WTC11 (cell line): ENCODE measurements at regions of chr6 and their contacts with region 1.

Region 1: DNA sequence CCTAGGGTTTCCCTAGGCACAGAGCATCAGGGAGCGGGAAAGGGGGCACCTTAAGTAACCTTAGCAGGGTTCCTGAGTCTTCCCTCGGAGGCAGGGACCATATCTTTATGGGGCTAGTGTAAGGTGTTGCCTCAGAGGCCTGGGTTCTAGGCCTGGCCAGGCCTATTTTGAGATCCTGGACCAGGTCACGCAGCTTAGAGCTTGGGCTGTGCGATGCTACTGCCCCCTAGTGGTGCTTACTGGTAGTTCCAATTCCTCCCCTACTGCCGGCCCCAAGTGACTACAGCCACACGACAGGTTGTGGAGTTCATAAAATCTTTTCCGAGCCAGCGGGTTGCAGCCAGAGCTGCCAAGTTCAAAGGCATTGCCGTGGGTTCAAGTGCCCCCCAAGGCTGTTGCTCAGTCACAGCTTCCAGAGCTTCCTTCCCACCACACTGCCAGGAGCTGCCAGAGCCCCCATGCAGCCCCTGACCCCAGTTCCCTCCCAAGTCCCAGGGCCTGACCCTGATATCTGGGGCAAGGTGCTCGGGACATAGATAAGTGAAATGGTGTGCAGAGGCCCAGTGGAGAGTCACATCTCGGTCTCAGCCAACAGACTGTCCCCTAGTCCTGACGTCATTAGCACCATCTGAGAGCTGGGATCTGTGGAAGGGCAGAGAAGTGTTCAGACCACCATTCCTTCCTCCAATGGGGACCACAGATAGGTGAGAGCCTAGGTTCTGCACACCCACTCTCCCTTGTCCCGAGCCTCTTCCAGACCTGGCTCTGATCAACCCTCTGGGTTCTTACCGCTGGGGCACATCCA is 3.3 kb downstream of the LRRC73 start:
- DNase-seq: peak; percentile 81
- ATAC-seq: peak; percentile 63
- H3K4me3 Mint-ChIP-seq: no peak overlapping the region
- H3K27ac Mint-ChIP-seq: no peak overlapping the region
- H3K4me1 Mint-ChIP-seq: peaks cover 17% of the 10 kb centered on the region
- H3K27me3 Mint-ChIP-seq: peaks cover 28% of the 10 kb centered on the region
- CTCF ChIP-seq: peak; percentile 97

Region 2: DNA sequence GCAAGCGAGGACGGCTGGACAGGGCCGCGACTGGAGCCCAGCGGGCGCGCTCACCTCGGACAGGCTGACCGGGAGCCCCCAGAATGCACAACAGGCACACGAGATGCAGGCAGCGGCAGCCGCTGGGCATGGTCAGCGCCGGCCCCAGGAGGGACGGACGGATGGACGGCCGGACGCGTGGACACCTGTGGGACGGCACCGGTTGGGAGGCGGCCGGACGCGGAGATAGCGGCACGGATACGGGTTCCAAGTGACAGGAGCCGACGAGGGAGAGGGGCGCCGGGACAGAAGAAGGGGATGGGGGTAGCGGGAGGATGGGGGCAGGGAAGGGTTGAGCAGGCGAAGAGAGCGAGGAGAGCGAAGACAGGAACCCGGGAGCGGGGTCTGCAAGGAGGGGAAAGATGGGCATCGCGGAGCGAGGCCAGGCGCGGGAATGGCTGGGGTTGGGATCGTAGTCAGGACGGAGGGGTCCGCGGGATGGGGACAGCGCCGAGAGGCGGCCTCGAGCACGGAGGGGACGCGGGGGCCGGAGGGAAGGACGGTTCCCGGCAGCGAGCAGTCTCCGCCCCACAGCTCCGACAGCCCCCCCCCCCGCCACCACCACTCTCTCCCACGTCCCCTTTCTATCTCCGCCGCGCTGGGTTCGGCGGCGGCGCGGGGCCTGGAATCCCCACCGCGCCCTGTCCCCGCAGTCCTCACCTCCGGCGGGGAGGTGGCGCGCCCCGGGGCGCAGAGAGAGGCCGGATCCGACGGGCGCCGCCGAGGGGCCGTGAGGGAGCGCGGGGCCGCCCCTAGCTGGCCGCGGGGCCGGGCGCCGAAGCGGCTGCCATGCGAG is 52.0 kb before region 1 on chr6:
- CTCF ChIA-PET with region 1: interaction called, 27 read pairs
- POLR2A ChIA-PET with region 1: no interaction called
- DNase-seq: peak; percentile 94
- ATAC-seq: peak; percentile 32
- H3K4me3 Mint-ChIP-seq: peak overlapping the region; percentile 65
- H3K27ac Mint-ChIP-seq: no peak overlapping the region
- H3K4me1 Mint-ChIP-seq: peaks cover 16% of the 10 kb centered on the region
- H3K27me3 Mint-ChIP-seq: peaks cover 43% of the 10 kb centered on the region
- CTCF ChIP-seq: no peak

Region 3: DNA sequence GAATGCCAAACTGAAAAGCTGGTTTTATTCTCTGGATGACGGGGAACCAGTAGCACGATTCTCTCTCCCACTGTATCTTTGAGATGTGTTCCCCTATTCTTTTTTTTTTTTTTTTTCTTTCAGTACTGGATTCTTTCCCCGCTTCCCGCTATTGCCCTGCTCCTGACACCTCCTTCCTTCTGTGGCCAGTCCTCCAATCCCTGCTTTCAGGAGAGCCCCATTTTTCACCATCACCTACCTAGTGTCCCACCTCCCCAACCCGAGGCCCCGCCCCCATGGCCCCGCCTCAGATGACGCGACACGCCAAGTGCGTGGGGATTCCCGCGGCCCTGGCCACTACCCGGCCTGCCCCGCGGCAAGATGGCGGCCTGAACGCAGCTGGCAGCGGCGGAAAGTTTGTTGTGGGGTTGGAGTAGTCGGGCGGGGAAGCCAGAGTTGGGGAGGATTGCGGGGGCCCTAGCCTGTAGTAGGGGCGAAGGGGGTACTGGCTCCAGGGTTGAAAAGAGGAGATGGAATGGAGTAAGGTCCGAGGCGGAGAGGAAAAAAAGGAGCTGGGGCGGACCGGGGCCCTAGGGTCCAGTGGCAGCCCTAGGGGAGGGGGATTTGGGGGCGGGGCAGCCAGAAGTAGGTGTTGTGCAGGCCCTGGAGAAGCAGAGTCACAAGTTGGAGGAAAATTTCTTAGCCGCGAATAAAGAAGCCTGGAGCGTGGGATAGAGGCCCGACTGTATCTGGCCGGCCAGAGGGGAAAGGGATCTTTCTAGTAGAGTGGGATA is 29.4 kb before region 1 on chr6 and contains the start of gene TJAP1:
- CTCF ChIA-PET with region 1: interaction called, 11 read pairs
- POLR2A ChIA-PET with region 1: no interaction called
- DNase-seq: peak; percentile 98
- ATAC-seq: peak; percentile 97
- H3K4me3 Mint-ChIP-seq: peak within 1 kb of the TSS; percentile 76
- H3K27ac Mint-ChIP-seq: peak within 1 kb of the TSS; percentile 82
- H3K4me1 Mint-ChIP-seq: peaks cover 45% of the 10 kb centered on the region
- H3K27me3 Mint-ChIP-seq: no peaks in the 10 kb centered on the region
- CTCF ChIP-seq: no peak
- total RNA-seq, gene TJAP1: 40.2 to 40.8 TPM (median 40.4 TPM) in 3 replicates

Region 4: GRCh38 chr6:43532201-43532600 is 25.3 kb after region 1 on chr6:
- CTCF ChIA-PET with region 1: no interaction called
- POLR2A ChIA-PET with region 1: no interaction called
- DNase-seq: no peak
- ATAC-seq: no peak
- H3K4me3 Mint-ChIP-seq: no peak overlapping the region
- H3K27ac Mint-ChIP-seq: no peak overlapping the region
- H3K4me1 Mint-ChIP-seq: no peaks in the 10 kb centered on the region
- H3K27me3 Mint-ChIP-seq: no peaks in the 10 kb centered on the region
- CTCF ChIP-seq: no peak